ENCODE measurements at regions of chr2 and their contacts with region 1.

Region 1: GRCh38 chr2:177164584-177165052 is 48.0 kb upstream of the HNRNPA3 start:
- DNase-seq: peak; percentile 56
- ATAC-seq: peak; percentile 64
- H3K4me3 ChIP-seq: peak overlapping the region; percentile 63
- H3K27ac ChIP-seq: peak overlapping the region; percentile 97
- H3K4me1 ChIP-seq: peaks cover 16% of the 10 kb centered on the region
- H3K27me3 ChIP-seq: no peaks in the 10 kb centered on the region
- CTCF ChIP-seq: peak; percentile 100; a peak in 5 of 6 replicates
- EP300 ChIP-seq: no peak; a peak in 1 of 4 replicates
- POLR2A ChIP-seq: no peak
- RAD21 ChIP-seq: peak; percentile 99

Region 2: DNA sequence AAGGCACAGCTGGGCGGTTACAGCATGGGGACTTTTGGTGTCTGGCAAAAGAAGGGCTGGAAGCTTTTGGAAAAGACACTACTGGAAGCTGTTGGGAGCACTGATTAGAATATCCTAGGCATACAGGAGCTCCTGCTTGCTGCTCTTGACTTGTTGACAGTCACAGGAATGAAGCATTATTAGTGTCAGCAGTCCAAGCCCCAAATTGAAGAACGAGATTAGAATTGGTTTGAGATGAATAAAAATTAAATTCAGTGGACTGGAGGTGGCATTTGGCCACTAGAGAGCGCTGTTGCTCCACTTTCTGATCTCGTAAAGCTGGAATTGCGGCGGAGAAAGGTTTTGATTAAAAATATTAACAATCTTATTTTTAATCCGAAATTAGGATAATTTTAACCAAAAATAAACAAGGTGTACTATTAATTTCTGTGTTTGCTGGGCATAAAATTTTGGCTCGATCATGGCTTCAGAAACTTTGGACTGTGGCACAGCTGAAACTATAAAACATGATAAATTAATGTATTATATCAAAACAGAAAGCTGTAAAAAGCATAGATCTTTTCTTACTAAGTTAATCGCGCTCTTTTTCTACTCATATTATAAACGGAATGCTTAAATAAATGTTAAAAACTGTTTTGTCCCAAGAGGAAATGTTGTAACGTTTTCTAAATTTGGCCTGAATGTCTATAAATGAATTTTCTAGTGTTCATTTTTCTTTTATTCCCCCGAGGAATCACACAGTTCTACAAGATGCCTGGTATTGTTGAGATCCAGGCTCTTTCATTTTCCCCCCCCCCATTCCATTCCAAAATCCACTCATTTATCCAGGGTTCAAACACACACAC is 1037.5 kb before region 1 on chr2:
- CTCF ChIA-PET with region 1: interaction called, 23 read pairs
- POLR2A ChIA-PET with region 1: no interaction called
- RAD21 ChIA-PET with region 1: interaction called, 9 read pairs
- SMC1A ChIA-PET with region 1: interaction called, 6 read pairs
- in situ Hi-C with region 1: no loop called
- intact Hi-C with region 1: loop called (anchors 5 kb)
- DNase-seq: no peak
- ATAC-seq: peak; percentile 49; the same call in 2 of the 3 replicates
- H3K4me3 ChIP-seq: no peak overlapping the region
- H3K27ac ChIP-seq: no peak overlapping the region
- H3K4me1 ChIP-seq: no peaks in the 10 kb centered on the region
- H3K27me3 ChIP-seq: peaks cover 7 to 29% of the 10 kb centered on the region in 2 experiments
- CTCF ChIP-seq: peak; percentile 61 to 77 (median 66)
- EP300 ChIP-seq: no peak
- POLR2A ChIP-seq: no peak
- RAD21 ChIP-seq: peak; percentile 81

Region 3: DNA sequence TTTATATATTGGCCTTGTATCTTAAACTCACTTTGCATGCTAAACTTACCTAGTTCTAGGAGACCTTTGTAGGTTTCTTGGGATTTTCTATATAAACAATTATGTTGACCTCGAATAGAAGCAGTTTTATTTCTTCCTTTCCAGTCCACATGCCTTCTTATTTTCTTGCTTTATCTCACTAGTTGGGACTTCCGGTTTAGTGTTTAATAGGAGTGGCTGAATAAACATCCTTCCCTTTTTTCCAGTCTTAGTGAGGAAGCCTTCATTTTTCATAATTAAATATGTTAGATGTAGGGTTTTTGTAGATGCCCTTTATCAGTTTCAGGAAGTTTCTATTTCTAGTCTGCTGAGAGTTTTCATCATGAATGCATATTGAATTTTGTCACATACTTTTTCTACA is 299.3 kb before region 1 on chr2:
- CTCF ChIA-PET with region 1: no interaction called
- POLR2A ChIA-PET with region 1: no interaction called
- RAD21 ChIA-PET with region 1: no interaction called
- SMC1A ChIA-PET with region 1: no interaction called
- in situ Hi-C with region 1: no loop called
- intact Hi-C with region 1: no loop called
- DNase-seq: no peak
- ATAC-seq: no peak
- H3K4me3 ChIP-seq: no peak overlapping the region
- H3K27ac ChIP-seq: no peak overlapping the region
- H3K4me1 ChIP-seq: no peaks in the 10 kb centered on the region
- H3K27me3 ChIP-seq: no peaks in the 10 kb centered on the region
- CTCF ChIP-seq: no peak
- EP300 ChIP-seq: no peak
- POLR2A ChIP-seq: no peak
- RAD21 ChIP-seq: no peak

Region 4: DNA sequence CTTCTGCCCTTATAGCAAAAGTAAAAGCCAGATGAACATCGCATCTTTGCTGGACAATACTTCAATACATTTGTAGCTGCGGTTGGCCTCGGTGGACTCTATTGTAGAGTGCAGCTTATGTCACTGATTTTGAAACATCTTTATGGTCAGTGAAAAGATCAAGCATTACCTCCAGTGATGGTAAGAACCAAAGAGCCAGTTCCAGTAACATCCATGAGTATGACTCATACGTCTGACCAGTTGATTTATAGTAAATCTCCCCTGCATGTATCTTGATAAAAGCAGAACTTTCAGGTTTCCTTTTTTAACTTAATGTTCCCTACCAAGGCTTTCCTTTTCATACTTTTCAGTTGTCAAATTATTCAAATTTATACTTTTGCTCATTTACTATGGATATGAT is 71.2 kb before region 1 on chr2:
- CTCF ChIA-PET with region 1: no interaction called
- POLR2A ChIA-PET with region 1: no interaction called
- RAD21 ChIA-PET with region 1: no interaction called
- SMC1A ChIA-PET with region 1: no interaction called
- in situ Hi-C with region 1: no loop called
- intact Hi-C with region 1: no loop called
- DNase-seq: no peak
- ATAC-seq: no peak
- H3K4me3 ChIP-seq: no peak overlapping the region
- H3K27ac ChIP-seq: no peak overlapping the region
- H3K4me1 ChIP-seq: no peaks in the 10 kb centered on the region
- H3K27me3 ChIP-seq: no peaks in the 10 kb centered on the region
- CTCF ChIP-seq: no peak
- EP300 ChIP-seq: no peak
- POLR2A ChIP-seq: no peak
- RAD21 ChIP-seq: no peak

Region 5: GRCh38 chr2:177195194-177195593 is 30.6 kb after region 1 on chr2:
- CTCF ChIA-PET with region 1: interaction called, 128 read pairs
- POLR2A ChIA-PET with region 1: interaction called, 9 read pairs
- RAD21 ChIA-PET with region 1: interaction called, 65 read pairs
- SMC1A ChIA-PET with region 1: interaction called, 82 read pairs
- in situ Hi-C with region 1: no loop called
- intact Hi-C with region 1: no loop called
- DNase-seq: no peak
- ATAC-seq: peak; percentile 86
- H3K4me3 ChIP-seq: no peak overlapping the region
- H3K27ac ChIP-seq: no peak overlapping the region
- H3K4me1 ChIP-seq: peaks cover 7% of the 10 kb centered on the region; the same call in 1 of the 2 replicates
- H3K27me3 ChIP-seq: no peaks in the 10 kb centered on the region
- CTCF ChIP-seq: peak; percentile 11 to 40 (median 23); a peak in 3 of 6 replicates
- EP300 ChIP-seq: no peak
- POLR2A ChIP-seq: no peak
- RAD21 ChIP-seq: peak; percentile 29; the same call in 1 of the 2 replicates

Region 6: DNA sequence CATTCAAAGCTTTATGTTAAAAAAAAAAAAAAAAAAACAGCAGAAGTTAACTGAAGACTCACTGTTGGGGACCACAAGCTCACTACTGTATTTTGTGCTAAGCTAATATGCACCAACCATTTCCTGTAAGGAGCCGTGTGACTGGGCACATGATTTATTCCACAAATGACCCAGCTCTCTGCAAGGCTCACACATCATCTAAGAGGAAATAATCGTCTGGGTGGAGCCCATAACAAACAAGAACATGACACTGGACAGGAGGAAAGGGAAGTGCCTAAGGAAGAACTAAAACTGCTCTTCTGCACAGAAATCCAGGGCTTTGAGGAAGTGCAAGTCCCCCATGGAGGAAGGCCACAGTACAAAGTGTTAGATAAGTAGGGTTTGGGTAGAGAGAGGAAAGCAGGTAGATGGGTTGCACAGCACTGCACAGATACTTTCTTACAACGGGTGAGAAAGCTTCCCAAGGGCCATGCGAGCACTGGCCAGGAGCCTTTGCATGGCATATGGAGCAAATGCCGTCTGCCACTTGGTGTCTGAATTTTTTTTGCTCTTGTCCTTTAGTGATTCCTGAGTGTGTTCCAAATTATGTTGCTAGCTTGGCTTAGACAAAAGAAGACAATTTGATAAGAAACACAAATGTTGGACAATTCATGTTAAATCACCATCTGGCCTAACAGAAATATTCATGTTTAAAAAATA is 75.5 kb after region 1 on chr2:
- CTCF ChIA-PET with region 1: interaction called, 24 read pairs
- POLR2A ChIA-PET with region 1: interaction called, 3 read pairs
- RAD21 ChIA-PET with region 1: interaction called, 10 read pairs
- SMC1A ChIA-PET with region 1: interaction called, 7 read pairs
- in situ Hi-C with region 1: no loop called
- intact Hi-C with region 1: no loop called
- DNase-seq: peak; percentile 47
- ATAC-seq: peak; percentile 86
- H3K4me3 ChIP-seq: no peak overlapping the region
- H3K27ac ChIP-seq: peak overlapping the region; percentile 0; the same call in 1 of the 2 replicates
- H3K4me1 ChIP-seq: peaks cover 22% of the 10 kb centered on the region
- H3K27me3 ChIP-seq: no peaks in the 10 kb centered on the region
- CTCF ChIP-seq: no peak
- EP300 ChIP-seq: no peak
- POLR2A ChIP-seq: no peak
- RAD21 ChIP-seq: no peak

Region 7: DNA sequence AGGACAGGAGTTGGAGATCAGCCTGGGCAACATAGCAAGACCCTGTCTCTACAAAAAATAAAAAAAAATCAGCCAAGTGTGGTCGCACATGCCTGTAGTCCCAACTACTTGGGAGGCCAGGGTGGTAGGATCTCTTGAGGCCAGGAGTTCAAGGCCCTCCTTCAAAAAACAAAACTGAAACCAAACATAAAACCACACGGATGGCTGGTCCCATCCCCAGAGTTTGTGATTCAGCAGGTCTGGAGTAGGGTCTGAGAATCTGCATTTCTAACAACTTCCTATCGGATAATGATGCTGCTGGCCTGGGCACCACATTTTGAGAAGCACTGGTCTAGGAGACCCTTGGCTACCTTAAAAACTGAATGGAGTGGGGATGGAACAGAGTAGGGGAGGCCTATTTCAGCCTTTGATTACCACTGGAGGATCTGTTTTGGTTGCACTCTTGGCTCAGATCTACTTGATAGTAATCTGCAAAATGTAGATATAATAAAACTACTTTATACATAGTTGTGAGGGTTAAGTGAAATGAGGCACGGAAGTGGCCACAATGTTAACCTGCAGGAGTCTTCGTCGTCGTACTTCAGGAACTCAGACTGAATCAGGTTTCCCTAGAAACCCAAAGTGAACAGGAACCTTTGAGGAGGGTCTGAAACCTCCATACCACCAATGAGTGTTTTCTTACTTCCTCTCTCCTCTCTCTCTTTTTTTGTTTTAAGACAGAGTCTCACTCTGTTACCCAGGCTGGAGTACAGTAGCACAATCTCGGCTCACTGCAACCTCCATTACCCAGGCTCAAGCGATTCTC is 125.4 kb after region 1 on chr2:
- CTCF ChIA-PET with region 1: interaction called, 162 read pairs
- POLR2A ChIA-PET with region 1: interaction called, 3 read pairs
- RAD21 ChIA-PET with region 1: interaction called, 38 read pairs
- SMC1A ChIA-PET with region 1: interaction called, 126 read pairs
- in situ Hi-C with region 1: no loop called
- intact Hi-C with region 1: loop called (anchors 10 kb)
- DNase-seq: peak; percentile 46
- ATAC-seq: peak; percentile 78
- H3K4me3 ChIP-seq: no peak overlapping the region
- H3K27ac ChIP-seq: peak overlapping the region; percentile 52
- H3K4me1 ChIP-seq: peaks cover 13% of the 10 kb centered on the region
- H3K27me3 ChIP-seq: no peaks in the 10 kb centered on the region
- CTCF ChIP-seq: no peak
- EP300 ChIP-seq: no peak
- POLR2A ChIP-seq: no peak
- RAD21 ChIP-seq: no peak

Region 8: DNA sequence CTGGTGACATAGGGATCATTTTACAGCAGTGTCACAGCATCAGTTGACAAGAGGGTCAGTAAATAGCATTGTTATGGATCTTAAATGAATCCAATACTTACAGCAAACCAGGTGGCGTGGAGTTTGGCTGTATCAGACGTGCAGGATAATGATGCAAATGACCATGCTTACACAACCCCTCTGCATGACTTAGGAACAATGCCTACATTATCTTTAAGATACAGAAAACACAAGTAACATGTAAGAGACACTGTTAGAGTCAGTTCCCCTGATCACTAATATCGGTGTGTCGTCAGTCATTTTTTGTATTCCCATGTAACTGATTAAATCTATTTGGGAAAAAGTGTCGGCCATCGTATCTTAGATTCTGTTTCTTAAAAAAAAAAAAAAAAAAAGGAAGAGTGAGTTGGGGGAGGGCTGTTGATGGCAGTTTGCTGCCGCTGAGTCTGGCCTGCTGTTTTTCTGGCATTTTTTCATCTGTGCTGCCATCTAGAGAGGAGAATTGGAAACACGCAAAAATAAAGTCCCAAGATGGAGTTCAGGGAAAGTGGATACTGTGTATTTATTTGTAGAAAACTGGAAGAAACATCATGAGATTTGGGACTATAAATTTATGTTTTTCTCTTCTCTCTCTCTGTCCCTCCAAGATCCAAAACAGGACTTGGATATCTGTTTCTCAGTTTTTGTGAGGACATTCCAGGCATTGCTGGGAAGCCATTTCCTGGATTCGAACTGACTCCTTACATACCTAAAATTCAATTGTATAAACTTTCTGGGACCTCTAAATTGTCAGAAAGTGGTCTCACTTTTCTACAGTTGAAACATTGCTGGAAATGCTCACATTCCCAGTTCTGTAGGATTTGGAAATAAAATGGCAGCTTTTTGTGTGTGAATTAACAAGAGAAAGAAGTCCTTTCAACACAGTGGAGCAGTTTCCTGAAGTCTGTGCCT is 167.7 kb after region 1 on chr2:
- CTCF ChIA-PET with region 1: interaction called, 163 read pairs
- POLR2A ChIA-PET with region 1: interaction called, 9 read pairs
- RAD21 ChIA-PET with region 1: interaction called, 102 read pairs
- SMC1A ChIA-PET with region 1: interaction called, 117 read pairs
- in situ Hi-C with region 1: loop called (anchors 5 kb)
- intact Hi-C with region 1: loop called (anchors 1 kb)
- DNase-seq: peak; percentile 45
- ATAC-seq: peak; percentile 92
- H3K4me3 ChIP-seq: no peak overlapping the region
- H3K27ac ChIP-seq: no peak overlapping the region
- H3K4me1 ChIP-seq: no peaks in the 10 kb centered on the region
- H3K27me3 ChIP-seq: no peaks in the 10 kb centered on the region
- CTCF ChIP-seq: peak; percentile 55 to 79 (median 62)
- EP300 ChIP-seq: no peak
- POLR2A ChIP-seq: no peak
- RAD21 ChIP-seq: peak; percentile 90

Region 9: DNA sequence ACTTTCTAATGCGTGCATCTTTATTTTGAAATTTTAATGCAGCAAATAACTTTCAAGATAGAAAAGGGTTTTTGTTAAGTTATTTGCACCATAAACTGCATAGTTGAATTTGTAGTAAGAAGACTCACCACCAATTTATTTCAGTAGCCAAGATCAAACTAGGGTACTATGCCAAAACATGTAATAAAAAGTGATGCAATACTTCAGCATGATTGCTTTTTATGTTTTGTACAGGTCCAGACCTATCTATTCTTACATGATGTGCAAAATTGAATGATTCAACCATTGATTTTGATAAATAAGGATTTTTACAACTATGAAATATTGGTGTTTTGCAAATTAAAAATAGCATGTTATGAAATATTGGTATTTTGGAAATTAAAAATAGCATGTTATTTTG is 254.7 kb after region 1 on chr2:
- CTCF ChIA-PET with region 1: interaction called, 88 read pairs
- POLR2A ChIA-PET with region 1: no interaction called
- RAD21 ChIA-PET with region 1: interaction called, 66 read pairs
- SMC1A ChIA-PET with region 1: interaction called, 34 read pairs
- in situ Hi-C with region 1: loop called (anchors 5 kb)
- intact Hi-C with region 1: loop called (anchors 2 kb)
- DNase-seq: no peak
- ATAC-seq: no peak
- H3K4me3 ChIP-seq: no peak overlapping the region
- H3K27ac ChIP-seq: no peak overlapping the region
- H3K4me1 ChIP-seq: no peaks in the 10 kb centered on the region
- H3K27me3 ChIP-seq: no peaks in the 10 kb centered on the region
- CTCF ChIP-seq: no peak
- EP300 ChIP-seq: no peak
- POLR2A ChIP-seq: no peak
- RAD21 ChIP-seq: no peak

Region 10: GRCh38 chr2:177921726-177922125 is 757.1 kb after region 1 on chr2:
- CTCF ChIA-PET with region 1: no interaction called
- POLR2A ChIA-PET with region 1: no interaction called
- RAD21 ChIA-PET with region 1: no interaction called
- SMC1A ChIA-PET with region 1: no interaction called
- in situ Hi-C with region 1: no loop called
- intact Hi-C with region 1: no loop called
- DNase-seq: no peak
- ATAC-seq: no peak
- H3K4me3 ChIP-seq: no peak overlapping the region
- H3K27ac ChIP-seq: no peak overlapping the region
- H3K4me1 ChIP-seq: no peaks in the 10 kb centered on the region
- H3K27me3 ChIP-seq: no peaks in the 10 kb centered on the region
- CTCF ChIP-seq: no peak
- EP300 ChIP-seq: no peak
- POLR2A ChIP-seq: no peak
- RAD21 ChIP-seq: no peak

Measured in GM12878 (cell line).